HepG2 (cell line): ENCODE measurements at regions of chr10 and their contacts with region 1.

Region 1: GRCh38 chr10:49538381-49539319 is at the start of gene ERCC6:
- DNase-seq: peak; percentile 94
- ATAC-seq: peak; percentile 97
- H3K4me3 ChIP-seq: peak within 1 kb of the TSS; percentile 78 to 83 (median 78)
- H3K27ac ChIP-seq: peak within 1 kb of the TSS; percentile 70
- H3K4me1 ChIP-seq: peaks cover 25% of the 10 kb centered on the region
- H3K27me3 ChIP-seq: peaks cover 0 to 15% of the 10 kb centered on the region in 2 experiments; a peak in 1 of 5 replicates
- CTCF ChIP-seq: peak; percentile 36
- EP300 ChIP-seq: no peak
- POLR2A ChIP-seq: peak; percentile 71 to 81
- RAD21 ChIP-seq: 0 out of 2 replicates have a peak, but pooled peaks have one; percentile 36
- total RNA-seq, gene ERCC6: 9.8 and 11.8 TPM in 2 replicates

Region 2: GRCh38 chr10:49488056-49488717 is 50.5 kb before region 1 on chr10:
- CTCF ChIA-PET with region 1: no interaction called
- POLR2A ChIA-PET with region 1: no interaction called
- in situ Hi-C with region 1: no loop called
- intact Hi-C with region 1: no loop called
- DNase-seq: no peak
- ATAC-seq: no peak
- H3K4me3 ChIP-seq: no peak overlapping the region
- H3K27ac ChIP-seq: no peak overlapping the region
- H3K4me1 ChIP-seq: no peaks in the 10 kb centered on the region
- H3K27me3 ChIP-seq: no peaks in the 10 kb centered on the region
- CTCF ChIP-seq: no peak
- EP300 ChIP-seq: no peak
- POLR2A ChIP-seq: no peak
- RAD21 ChIP-seq: no peak

Region 3: GRCh38 chr10:49556723-49557122 is 18.1 kb after region 1 on chr10:
- CTCF ChIA-PET with region 1: no interaction called
- POLR2A ChIA-PET with region 1: no interaction called
- in situ Hi-C with region 1: no loop called
- intact Hi-C with region 1: loop called (anchors 1 kb)
- DNase-seq: no peak
- ATAC-seq: no peak
- H3K4me3 ChIP-seq: no peak overlapping the region
- H3K27ac ChIP-seq: no peak overlapping the region
- H3K4me1 ChIP-seq: no peaks in the 10 kb centered on the region
- H3K27me3 ChIP-seq: peaks cover 0 to 21% of the 10 kb centered on the region in 2 experiments; a peak in 3 of 5 replicates
- CTCF ChIP-seq: no peak
- EP300 ChIP-seq: no peak
- POLR2A ChIP-seq: no peak
- RAD21 ChIP-seq: no peak